K562 (cell line): ENCODE measurements at regions of chr2 and their contacts with region 1.

Region 1: GRCh38 chr2:200509612-200510433 is at the start of gene KCTD18:
- DNase-seq: peak; percentile 87 to 91 (median 90)
- ATAC-seq: peak; percentile 98
- H3K4me3 ChIP-seq: peak within 1 kb of the TSS; percentile 56
- H3K27ac ChIP-seq: peak within 1 kb of the TSS; percentile 80
- H3K4me1 ChIP-seq: peaks cover 0 to 4% of the 10 kb centered on the region in 2 experiments; a peak in 1 of 5 replicates
- H3K27me3 ChIP-seq: no peaks in the 10 kb centered on the region
- CTCF ChIP-seq: peak; percentile 71 to 82 (median 72)
- EP300 ChIP-seq: no peak
- POLR2A ChIP-seq: peak; percentile 62; the same call in 1 of the 2 replicates
- RAD21 ChIP-seq: peak; percentile 27 to 51
- polyA plus RNA-seq, gene KCTD18: 0.39 to 0.43 TPM

Region 2: DNA sequence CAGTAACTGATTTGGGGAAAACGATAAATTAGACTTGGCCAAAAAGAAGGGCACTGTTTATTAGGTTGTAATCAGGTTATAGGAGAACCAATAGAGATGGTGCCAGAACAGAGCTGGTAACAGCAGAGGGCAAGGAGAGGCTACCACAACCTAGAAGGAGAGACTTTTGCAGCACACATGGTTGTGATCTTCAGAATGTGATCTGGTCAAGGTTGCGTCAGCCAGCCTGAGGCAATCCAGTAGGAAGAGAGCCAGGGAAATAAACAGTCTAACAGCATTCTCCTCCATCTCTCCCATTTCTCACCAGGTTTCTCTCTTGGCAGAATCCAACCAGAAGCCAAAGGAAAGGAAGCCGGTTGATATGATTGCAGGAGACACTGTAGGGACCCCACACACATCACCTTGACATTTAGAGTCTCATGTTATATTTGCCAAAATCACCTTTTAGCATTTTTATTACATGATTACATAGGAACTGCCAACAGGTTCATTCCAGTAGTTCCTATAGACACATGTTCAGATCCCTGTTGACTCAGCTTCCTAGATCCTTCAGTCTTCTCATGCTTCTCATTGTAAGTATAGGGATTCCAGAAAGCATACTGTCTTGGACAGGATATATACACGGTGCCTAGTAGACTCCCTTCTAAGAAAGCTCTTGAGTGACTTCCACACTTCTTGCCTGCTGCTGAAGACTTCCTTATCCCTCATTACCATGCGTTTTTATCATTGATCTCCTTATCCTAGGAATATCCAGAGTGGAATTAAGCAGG is 221.0 kb before region 1 on chr2:
- CTCF ChIA-PET with region 1: no interaction called
- POLR2A ChIA-PET with region 1: no interaction called
- in situ Hi-C with region 1: no loop called
- intact Hi-C with region 1: no loop called
- DNase-seq: no peak
- ATAC-seq: no peak
- H3K4me3 ChIP-seq: no peak overlapping the region
- H3K27ac ChIP-seq: no peak overlapping the region
- H3K4me1 ChIP-seq: peaks cover 0 to 6% of the 10 kb centered on the region in 2 experiments; a peak in 1 of 5 replicates
- H3K27me3 ChIP-seq: no peaks in the 10 kb centered on the region
- CTCF ChIP-seq: no peak
- EP300 ChIP-seq: no peak
- POLR2A ChIP-seq: no peak
- RAD21 ChIP-seq: no peak

Region 3: GRCh38 chr2:200300648-200301314 is 209.0 kb before region 1 on chr2:
- CTCF ChIA-PET with region 1: no interaction called
- POLR2A ChIA-PET with region 1: no interaction called
- in situ Hi-C with region 1: no loop called
- intact Hi-C with region 1: no loop called
- DNase-seq: peak; percentile 14 to 44 (median 24)
- ATAC-seq: no peak
- H3K4me3 ChIP-seq: no peak overlapping the region
- H3K27ac ChIP-seq: no peak overlapping the region
- H3K4me1 ChIP-seq: peaks cover 0 to 11% of the 10 kb centered on the region in 2 experiments; a peak in 2 of 5 replicates
- H3K27me3 ChIP-seq: no peaks in the 10 kb centered on the region
- CTCF ChIP-seq: no peak
- EP300 ChIP-seq: no peak
- POLR2A ChIP-seq: no peak
- RAD21 ChIP-seq: no peak

Region 4: GRCh38 chr2:200525882-200526651 is 16.2 kb after region 1 on chr2 and contains the start of gene SGO2:
- CTCF ChIA-PET with region 1: interaction called, 4 read pairs
- POLR2A ChIA-PET with region 1: interaction called, 4 read pairs
- in situ Hi-C with region 1: no loop called
- intact Hi-C with region 1: loop called (anchors 2 kb)
- DNase-seq: peak; percentile 91 to 95 (median 92)
- ATAC-seq: peak; percentile 100
- H3K4me3 ChIP-seq: peak within 1 kb of the TSS; percentile 91
- H3K27ac ChIP-seq: peak within 1 kb of the TSS; percentile 92
- H3K4me1 ChIP-seq: peaks cover 0 to 20% of the 10 kb centered on the region in 2 experiments; a peak in 2 of 5 replicates
- H3K27me3 ChIP-seq: no peaks in the 10 kb centered on the region; a peak in 1 of 5 replicates
- CTCF ChIP-seq: peak in 2 of 3 experiments; percentile 15 to 16; a peak in 1 of 6 replicates
- EP300 ChIP-seq: peak; percentile 43
- POLR2A ChIP-seq: peak; percentile 80
- RAD21 ChIP-seq: 0 out of 4 replicates have a peak, but pooled peaks of 1 of the 2 experiments have one; percentile 17
- polyA plus RNA-seq, gene SGO2: 15.0 to 18.4 TPM

Region 5: GRCh38 chr2:200975672-200976071 is 465.8 kb after region 1 on chr2:
- CTCF ChIA-PET with region 1: no interaction called
- POLR2A ChIA-PET with region 1: no interaction called
- in situ Hi-C with region 1: no loop called
- intact Hi-C with region 1: no loop called
- DNase-seq: no peak
- ATAC-seq: no peak
- H3K4me3 ChIP-seq: no peak overlapping the region
- H3K27ac ChIP-seq: no peak overlapping the region
- H3K4me1 ChIP-seq: no peaks in the 10 kb centered on the region
- H3K27me3 ChIP-seq: no peaks in the 10 kb centered on the region
- CTCF ChIP-seq: no peak
- EP300 ChIP-seq: no peak
- POLR2A ChIP-seq: no peak
- RAD21 ChIP-seq: no peak